ENCODE measurements at regions of chr3 and their contacts with region 1.

Region 1: DNA sequence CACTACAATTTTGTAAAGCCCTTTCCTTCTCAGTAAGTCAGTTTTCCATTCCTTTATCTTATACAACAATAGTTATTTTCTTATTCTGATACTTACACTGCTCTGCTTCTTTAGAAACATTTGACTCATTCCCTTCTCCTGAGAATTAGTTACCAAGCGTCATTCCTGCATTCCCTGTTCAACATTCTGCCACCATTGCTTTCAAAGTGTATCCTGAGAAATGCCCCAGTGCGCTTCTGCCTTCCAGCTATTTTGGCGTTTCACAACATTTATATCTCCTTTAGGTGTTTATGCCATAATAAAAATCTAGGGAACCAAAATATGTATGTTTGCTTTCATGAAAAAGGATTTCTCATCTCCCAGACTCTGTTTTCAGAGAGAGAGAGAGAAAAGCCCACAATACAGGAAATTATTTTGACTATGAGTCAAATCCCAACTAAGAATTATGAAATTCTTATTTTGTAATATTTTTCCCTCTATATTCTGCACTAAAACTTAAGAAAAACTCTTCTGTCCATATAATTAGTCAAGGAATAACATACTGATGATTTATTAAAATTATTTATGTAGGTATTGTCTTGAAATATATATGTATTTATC is 118.2 kb upstream of the RAP2B start:
- DNase-seq: peak in 2 of 3 donors; percentile 21 to 44
- H3K4me3 ChIP-seq: peak overlapping the region in 1 of 3 experiments; percentile 67
- H3K4me3 Mint-ChIP-seq: peak overlapping the region; percentile 66 to 72
- H3K27ac ChIP-seq: peak overlapping the region in 1 of 2 donors; percentile 17
- H3K27ac Mint-ChIP-seq: peak overlapping the region in 6 of 7 donors; percentile 39 to 86 (median 63)
- H3K4me1 ChIP-seq: peaks cover 17 to 23% of the 10 kb centered on the region in 2 donors
- H3K4me1 Mint-ChIP-seq: peaks cover 24% of the 10 kb centered on the region
- H3K27me3 ChIP-seq: no peaks in the 10 kb centered on the region
- H3K27me3 Mint-ChIP-seq: no peaks in the 10 kb centered on the region
- CTCF ChIP-seq: no peak

Region 2: GRCh38 chr3:152870027-152870426 is 173.8 kb before region 1 on chr3:
- intact Hi-C with region 1: no loop called
- DNase-seq: peak; percentile 57 to 73 (median 62)
- H3K4me3 ChIP-seq: no peak overlapping the region
- H3K4me3 Mint-ChIP-seq: peak overlapping the region in 1 of 2 donors; percentile 49
- H3K27ac ChIP-seq: no peak overlapping the region
- H3K27ac Mint-ChIP-seq: peak overlapping the region in 6 of 7 donors; percentile 27 to 82 (median 54)
- H3K4me1 ChIP-seq: peaks cover 16 to 22% of the 10 kb centered on the region in 2 donors
- H3K4me1 Mint-ChIP-seq: peaks cover 25% of the 10 kb centered on the region
- H3K27me3 ChIP-seq: no peaks in the 10 kb centered on the region
- H3K27me3 Mint-ChIP-seq: no peaks in the 10 kb centered on the region
- CTCF ChIP-seq: no peak

Region 3: DNA sequence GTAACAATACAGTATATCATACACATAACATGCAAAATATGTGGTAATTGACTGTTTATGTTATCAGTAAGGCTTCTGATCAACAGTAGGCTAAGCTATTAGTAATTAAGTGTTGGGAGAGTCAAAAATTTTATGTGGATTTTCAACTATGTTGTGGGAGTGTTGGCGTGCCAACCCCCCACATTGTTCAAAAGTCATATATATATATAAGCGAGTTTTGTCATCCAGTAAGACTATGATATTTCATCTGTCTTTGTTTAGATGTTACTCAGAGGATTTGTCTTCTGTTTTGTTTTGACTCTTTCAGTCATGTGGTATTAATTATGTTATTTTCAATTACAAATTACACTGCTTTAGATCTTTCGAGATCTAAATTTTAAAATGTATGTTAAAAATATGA is 67.2 kb after region 1 on chr3:
- intact Hi-C with region 1: no loop called
- DNase-seq: no peak
- H3K4me3 ChIP-seq: no peak overlapping the region
- H3K4me3 Mint-ChIP-seq: no peak overlapping the region
- H3K27ac ChIP-seq: no peak overlapping the region
- H3K27ac Mint-ChIP-seq: no peak overlapping the region
- H3K4me1 ChIP-seq: peaks cover 5% of the 10 kb centered on the region in 2 donors
- H3K4me1 Mint-ChIP-seq: peaks cover 7% of the 10 kb centered on the region
- H3K27me3 ChIP-seq: no peaks in the 10 kb centered on the region
- H3K27me3 Mint-ChIP-seq: no peaks in the 10 kb centered on the region
- CTCF ChIP-seq: no peak

Region 4: GRCh38 chr3:153138276-153139210 is 94.7 kb after region 1 on chr3:
- intact Hi-C with region 1: loop called in 1 of 2 experiments (anchors 5 kb)
- DNase-seq: peak; percentile 86 to 98 (median 95)
- H3K4me3 ChIP-seq: peak overlapping the region in 1 of 3 experiments; percentile 24
- H3K4me3 Mint-ChIP-seq: peak overlapping the region in 1 of 2 donors; percentile 55
- H3K27ac ChIP-seq: peak overlapping the region in 1 of 2 donors; percentile 65
- H3K27ac Mint-ChIP-seq: peak overlapping the region; percentile 85 to 93 (median 90)
- H3K4me1 ChIP-seq: peaks cover 27 to 40% of the 10 kb centered on the region in 2 donors
- H3K4me1 Mint-ChIP-seq: peaks cover 36% of the 10 kb centered on the region
- H3K27me3 ChIP-seq: no peaks in the 10 kb centered on the region
- H3K27me3 Mint-ChIP-seq: peaks cover 0 to 2% (median 0%) of the 10 kb centered on the region in 3 donors
- CTCF ChIP-seq: no peak

Region 5: GRCh38 chr3:153330901-153331300 is 287.1 kb after region 1 on chr3:
- intact Hi-C with region 1: no loop called
- DNase-seq: no peak
- H3K4me3 ChIP-seq: no peak overlapping the region
- H3K4me3 Mint-ChIP-seq: no peak overlapping the region
- H3K27ac ChIP-seq: no peak overlapping the region
- H3K27ac Mint-ChIP-seq: no peak overlapping the region
- H3K4me1 ChIP-seq: no peaks in the 10 kb centered on the region
- H3K4me1 Mint-ChIP-seq: no peaks in the 10 kb centered on the region
- H3K27me3 ChIP-seq: no peaks in the 10 kb centered on the region
- H3K27me3 Mint-ChIP-seq: peaks cover 0 to 1% (median 0%) of the 10 kb centered on the region in 3 donors
- CTCF ChIP-seq: no peak

Region 6: GRCh38 chr3:153373606-153374005 is 329.8 kb after region 1 on chr3:
- intact Hi-C with region 1: loop called in 1 of 2 experiments (anchors 10 kb)
- DNase-seq: peak; percentile 78 to 95 (median 92)
- H3K4me3 ChIP-seq: no peak overlapping the region
- H3K4me3 Mint-ChIP-seq: peak overlapping the region; percentile 20 to 69
- H3K27ac ChIP-seq: peak overlapping the region; percentile 48 to 66
- H3K27ac Mint-ChIP-seq: peak overlapping the region; percentile 81 to 92 (median 87)
- H3K4me1 ChIP-seq: peaks cover 23 to 25% of the 10 kb centered on the region in 2 donors
- H3K4me1 Mint-ChIP-seq: peaks cover 24% of the 10 kb centered on the region
- H3K27me3 ChIP-seq: no peaks in the 10 kb centered on the region
- H3K27me3 Mint-ChIP-seq: no peaks in the 10 kb centered on the region
- CTCF ChIP-seq: no peak

Region 7: DNA sequence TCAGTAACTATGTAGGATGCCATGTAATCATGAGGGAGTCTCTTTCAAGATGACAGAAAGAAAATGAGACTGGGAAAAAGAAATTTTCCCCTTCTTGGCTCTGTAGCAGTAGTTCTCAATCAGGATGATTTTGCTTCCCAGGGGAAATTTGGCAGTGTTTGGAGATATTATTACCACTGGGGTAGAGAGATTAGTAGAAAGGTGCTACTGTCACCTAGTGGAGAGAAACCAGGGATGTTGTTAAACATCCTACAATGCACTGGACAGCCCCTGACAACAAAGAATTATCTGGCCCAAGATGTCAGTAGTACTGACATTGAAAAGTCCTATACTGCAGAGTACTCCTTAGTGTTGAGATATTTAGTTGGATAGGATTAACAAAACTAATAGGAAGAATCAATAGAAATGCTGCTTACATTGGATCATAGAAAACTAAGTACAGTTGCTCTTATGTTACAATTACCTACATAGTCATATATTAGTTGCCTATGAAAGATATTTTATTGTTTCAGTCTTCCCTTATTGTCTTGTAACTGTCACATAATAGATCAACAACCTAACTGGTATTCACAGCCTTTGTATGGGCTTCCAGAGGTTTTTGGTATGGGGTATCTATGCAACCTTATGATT is 551.5 kb after region 1 on chr3:
- intact Hi-C with region 1: loop called in 1 of 2 experiments (anchors 10 kb)
- DNase-seq: peak in 2 of 3 donors; percentile 12 to 20
- H3K4me3 ChIP-seq: no peak overlapping the region
- H3K4me3 Mint-ChIP-seq: no peak overlapping the region
- H3K27ac ChIP-seq: no peak overlapping the region
- H3K27ac Mint-ChIP-seq: no peak overlapping the region
- H3K4me1 ChIP-seq: peaks cover 16 to 18% of the 10 kb centered on the region in 2 donors
- H3K4me1 Mint-ChIP-seq: peaks cover 21% of the 10 kb centered on the region
- H3K27me3 ChIP-seq: no peaks in the 10 kb centered on the region
- H3K27me3 Mint-ChIP-seq: peaks cover 0 to 2% (median 0%) of the 10 kb centered on the region in 3 donors
- CTCF ChIP-seq: peak; percentile 44

Region 8: DNA sequence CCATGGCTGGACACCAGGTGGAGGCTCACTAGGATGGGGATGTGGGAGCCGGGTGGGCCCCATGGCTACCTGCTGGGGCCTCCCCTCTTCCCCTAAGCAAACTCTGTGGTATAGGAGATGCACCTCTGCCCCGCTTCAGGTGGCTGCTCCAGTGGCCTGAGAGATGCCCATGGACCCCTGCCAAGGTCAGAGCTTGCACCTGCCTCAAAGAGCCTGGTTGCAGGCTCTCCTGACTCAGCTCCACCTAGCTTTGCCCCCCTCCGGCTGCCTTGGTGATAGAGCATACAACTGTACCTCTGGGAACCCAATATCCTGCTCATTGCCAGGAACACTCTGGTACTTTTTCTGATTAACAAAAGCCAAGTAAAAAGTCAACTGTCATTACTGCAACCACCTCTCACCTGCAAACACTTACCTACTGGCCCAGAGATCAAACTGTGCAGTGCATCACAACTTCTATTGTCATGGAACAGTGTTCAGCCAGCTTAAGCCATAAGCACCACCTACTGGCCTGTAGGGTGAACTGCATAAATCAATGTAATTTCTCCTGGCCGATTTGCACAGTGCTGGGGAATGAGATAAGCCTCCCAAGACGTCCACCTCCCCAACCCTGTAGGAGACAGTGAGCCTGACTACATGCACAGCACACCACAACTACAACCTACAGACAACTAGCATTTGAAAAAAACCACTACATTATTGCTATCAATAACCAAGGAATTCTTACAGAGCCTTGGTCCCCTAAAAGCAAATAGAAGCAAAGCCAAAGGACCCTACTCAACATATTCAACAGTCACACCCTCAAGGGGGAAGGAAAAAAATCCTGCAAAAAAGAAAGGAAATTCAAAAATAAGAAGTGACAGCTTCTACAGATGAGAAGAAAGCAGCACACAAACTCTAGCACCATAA is 725.0 kb after region 1 on chr3:
- intact Hi-C with region 1: loop called in 1 of 2 experiments (anchors 5 kb)
- DNase-seq: peak; percentile 30 to 55 (median 53)
- H3K4me3 ChIP-seq: no peak overlapping the region
- H3K4me3 Mint-ChIP-seq: no peak overlapping the region
- H3K27ac ChIP-seq: no peak overlapping the region
- H3K27ac Mint-ChIP-seq: no peak overlapping the region
- H3K4me1 ChIP-seq: no peaks in the 10 kb centered on the region
- H3K4me1 Mint-ChIP-seq: no peaks in the 10 kb centered on the region
- H3K27me3 ChIP-seq: no peaks in the 10 kb centered on the region
- H3K27me3 Mint-ChIP-seq: peaks cover 3 to 6% (median 4%) of the 10 kb centered on the region in 3 donors
- CTCF ChIP-seq: peak; percentile 81

Measured in CD14-positive monocyte (primary cell).